GM12878 (cell line): ENCODE measurements at regions of chr10 and their contacts with region 1.

Region 1: DNA sequence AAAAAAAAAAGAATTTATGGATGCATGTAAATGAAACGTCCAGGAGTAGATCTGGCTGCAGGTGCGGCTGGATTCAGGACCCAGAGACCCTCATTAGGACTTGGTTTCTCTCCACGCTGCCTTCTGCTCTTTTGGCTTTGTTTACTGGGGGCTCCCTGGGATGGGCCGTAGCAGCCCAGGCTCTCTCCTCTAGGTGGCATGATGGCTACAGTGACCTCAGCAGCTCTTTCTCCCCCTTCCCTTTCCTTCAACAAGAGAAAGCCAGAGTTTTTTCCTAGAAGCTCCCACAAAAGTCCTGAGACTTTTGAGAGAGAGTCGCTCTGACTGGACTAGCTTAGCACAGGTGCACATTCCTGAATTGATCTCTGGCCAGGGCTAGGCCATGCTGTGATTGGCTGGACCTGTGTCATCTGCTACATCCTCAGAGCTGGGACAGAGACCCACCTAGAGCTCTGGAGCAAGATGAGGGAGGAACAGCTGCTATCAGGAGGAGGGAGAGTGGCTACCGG is 67.8 kb upstream of the PDCD4 start:
- DNase-seq: peak; percentile 47
- ATAC-seq: peak; percentile 85
- H3K4me3 ChIP-seq: no peak overlapping the region
- H3K27ac ChIP-seq: peak overlapping the region; percentile 91
- H3K4me1 ChIP-seq: peaks cover 33% of the 10 kb centered on the region
- H3K27me3 ChIP-seq: no peaks in the 10 kb centered on the region
- CTCF ChIP-seq: peak; percentile 76 to 83 (median 81)
- EP300 ChIP-seq: no peak
- POLR2A ChIP-seq: peak; percentile 25; the same call in 1 of the 2 replicates
- RAD21 ChIP-seq: peak; percentile 90

Region 2: DNA sequence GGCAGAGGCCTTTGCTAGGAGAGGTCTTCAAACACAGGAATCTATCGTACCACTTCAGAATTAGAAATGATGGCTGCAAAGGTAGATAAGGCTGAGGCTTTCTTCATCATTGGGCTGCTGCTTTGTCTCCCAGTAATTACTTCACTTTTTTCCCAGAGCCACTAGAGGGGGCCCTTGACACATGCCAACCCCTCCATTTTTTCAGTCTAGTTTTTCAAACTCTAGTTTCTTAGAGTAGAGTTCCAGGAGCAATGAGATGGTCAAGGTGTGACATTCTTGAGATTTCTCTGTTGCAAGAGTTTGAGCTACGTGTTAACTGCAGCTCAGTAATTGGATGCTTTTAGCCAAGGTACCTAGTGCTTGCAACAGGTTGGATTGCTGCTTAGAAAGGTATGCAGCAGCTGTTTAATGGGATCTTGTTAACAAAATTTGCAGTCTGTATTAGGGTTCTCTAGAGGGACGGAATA is 193.5 kb before region 1 on chr10:
- CTCF ChIA-PET with region 1: interaction called, 15 read pairs
- POLR2A ChIA-PET with region 1: no interaction called
- RAD21 ChIA-PET with region 1: interaction called, 11 read pairs
- SMC1A ChIA-PET with region 1: interaction called, 4 read pairs
- in situ Hi-C with region 1: no loop called
- intact Hi-C with region 1: loop called (anchors 5 kb)
- DNase-seq: peak; percentile 24
- ATAC-seq: peak; percentile 10; the same call in 2 of the 3 replicates
- H3K4me3 ChIP-seq: no peak overlapping the region
- H3K27ac ChIP-seq: no peak overlapping the region
- H3K4me1 ChIP-seq: peaks cover 31% of the 10 kb centered on the region
- H3K27me3 ChIP-seq: no peaks in the 10 kb centered on the region
- CTCF ChIP-seq: peak; percentile 85 to 92 (median 88)
- EP300 ChIP-seq: no peak
- POLR2A ChIP-seq: no peak
- RAD21 ChIP-seq: peak; percentile 98

Region 3: GRCh38 chr10:110681023-110681681 is 122.7 kb before region 1 on chr10:
- CTCF ChIA-PET with region 1: no interaction called
- POLR2A ChIA-PET with region 1: no interaction called
- RAD21 ChIA-PET with region 1: no interaction called
- SMC1A ChIA-PET with region 1: no interaction called
- in situ Hi-C with region 1: no loop called
- intact Hi-C with region 1: no loop called
- DNase-seq: no peak
- ATAC-seq: peak; percentile 89
- H3K4me3 ChIP-seq: no peak overlapping the region
- H3K27ac ChIP-seq: no peak overlapping the region
- H3K4me1 ChIP-seq: no peaks in the 10 kb centered on the region
- H3K27me3 ChIP-seq: no peaks in the 10 kb centered on the region
- CTCF ChIP-seq: peak; percentile 49 to 64 (median 55)
- EP300 ChIP-seq: no peak
- POLR2A ChIP-seq: no peak
- RAD21 ChIP-seq: peak; percentile 27; the same call in 1 of the 2 replicates

Region 4: DNA sequence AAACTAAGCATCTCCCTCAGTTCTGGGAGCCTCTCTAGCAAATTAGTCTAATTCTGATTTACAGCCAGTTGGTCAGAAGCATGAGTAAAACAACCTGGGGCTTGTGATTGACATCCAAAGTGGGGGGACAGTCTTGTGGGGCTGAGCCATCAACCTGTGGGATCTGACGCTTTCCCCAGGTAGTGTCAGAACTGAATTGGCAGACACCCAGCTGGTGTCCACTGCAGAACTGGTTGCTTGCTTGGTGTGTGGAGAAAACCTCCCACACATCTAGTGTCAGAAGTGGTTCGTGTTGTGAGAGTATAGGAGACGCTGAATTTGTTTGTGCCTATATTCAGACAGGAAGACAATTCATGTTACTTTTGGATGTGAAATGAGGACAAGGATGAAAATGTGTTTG is 24.4 kb before region 1 on chr10:
- CTCF ChIA-PET with region 1: interaction called, 72 read pairs
- POLR2A ChIA-PET with region 1: interaction called, 46 read pairs
- RAD21 ChIA-PET with region 1: interaction called, 135 read pairs
- SMC1A ChIA-PET with region 1: interaction called, 327 read pairs
- in situ Hi-C with region 1: no loop called
- intact Hi-C with region 1: loop called (anchors 1 kb)
- DNase-seq: no peak
- ATAC-seq: peak; percentile 30
- H3K4me3 ChIP-seq: no peak overlapping the region
- H3K27ac ChIP-seq: no peak overlapping the region
- H3K4me1 ChIP-seq: peaks cover 9% of the 10 kb centered on the region; the same call in 1 of the 2 replicates
- H3K27me3 ChIP-seq: no peaks in the 10 kb centered on the region
- CTCF ChIP-seq: no peak
- EP300 ChIP-seq: no peak
- POLR2A ChIP-seq: no peak
- RAD21 ChIP-seq: no peak

Region 5: GRCh38 chr10:110843031-110843430 is 39.1 kb after region 1 on chr10:
- CTCF ChIA-PET with region 1: interaction called, 70 read pairs
- POLR2A ChIA-PET with region 1: interaction called, 48 read pairs
- RAD21 ChIA-PET with region 1: interaction called, 153 read pairs
- SMC1A ChIA-PET with region 1: interaction called, 147 read pairs
- in situ Hi-C with region 1: no loop called
- intact Hi-C with region 1: loop called (anchors 1 kb)
- DNase-seq: peak; percentile 98
- ATAC-seq: peak; percentile 74
- H3K4me3 ChIP-seq: peak overlapping the region; percentile 68
- H3K27ac ChIP-seq: peak overlapping the region; percentile 97
- H3K4me1 ChIP-seq: peaks cover 53% of the 10 kb centered on the region
- H3K27me3 ChIP-seq: no peaks in the 10 kb centered on the region
- CTCF ChIP-seq: no peak
- EP300 ChIP-seq: peak; percentile 53 to 91; a peak in 3 of 4 replicates
- POLR2A ChIP-seq: no peak; the same call in 1 of the 2 replicates
- RAD21 ChIP-seq: peak; percentile 37; the same call in 1 of the 2 replicates

Region 6: DNA sequence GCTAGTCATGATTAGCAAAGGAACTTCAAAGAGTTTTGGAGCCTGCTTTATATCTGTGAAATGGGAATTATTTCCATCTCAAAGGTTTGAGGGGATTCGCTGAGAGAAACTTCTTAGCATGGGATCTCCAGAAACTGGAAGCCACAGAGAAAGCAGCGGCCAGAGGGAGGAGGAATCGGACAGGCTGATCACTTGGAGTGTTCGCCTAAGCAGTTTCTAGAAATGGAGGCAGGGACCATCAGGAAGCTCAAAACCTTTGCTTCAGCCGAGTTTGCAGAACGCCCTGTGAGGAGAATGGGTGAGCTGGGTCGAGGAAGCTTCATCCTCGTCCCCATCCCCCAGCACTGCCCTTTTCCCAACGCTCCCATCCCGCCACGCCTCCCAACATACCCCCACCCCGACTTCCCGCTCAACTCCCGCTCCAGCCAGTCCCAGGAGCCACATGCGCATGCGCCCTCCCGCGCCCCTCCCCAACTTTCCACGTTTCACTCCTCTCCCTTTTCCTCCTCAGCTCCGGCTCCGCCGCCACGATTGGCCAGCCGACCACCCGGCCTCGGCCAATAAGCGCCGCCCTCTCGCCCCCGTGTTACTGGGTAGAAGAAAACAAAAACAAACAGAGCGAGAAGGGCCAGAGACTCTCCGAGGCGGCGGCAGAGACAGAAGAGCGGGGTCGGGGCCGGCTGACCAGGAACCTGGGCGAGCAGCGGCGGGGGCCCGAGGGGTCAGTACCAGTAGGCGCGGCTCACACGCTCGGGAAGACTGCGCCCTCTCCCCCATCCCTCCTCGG is 67.6 kb after region 1 on chr10 and contains the start of gene PDCD4:
- CTCF ChIA-PET with region 1: interaction called, 53 read pairs
- POLR2A ChIA-PET with region 1: interaction called, 20 read pairs
- RAD21 ChIA-PET with region 1: interaction called, 77 read pairs
- SMC1A ChIA-PET with region 1: interaction called, 102 read pairs
- in situ Hi-C with region 1: no loop called
- intact Hi-C with region 1: loop called (anchors 2 kb)
- DNase-seq: peak; percentile 86
- ATAC-seq: peak; percentile 78
- H3K4me3 ChIP-seq: peak within 1 kb of the TSS; percentile 65
- H3K27ac ChIP-seq: peak within 1 kb of the TSS; percentile 99
- H3K4me1 ChIP-seq: peaks cover 48% of the 10 kb centered on the region
- H3K27me3 ChIP-seq: no peaks in the 10 kb centered on the region
- CTCF ChIP-seq: no peak
- EP300 ChIP-seq: no peak
- POLR2A ChIP-seq: peak; percentile 96
- RAD21 ChIP-seq: no peak
- polyA plus RNA-seq, gene PDCD4: 101 to 138 TPM

Region 7: DNA sequence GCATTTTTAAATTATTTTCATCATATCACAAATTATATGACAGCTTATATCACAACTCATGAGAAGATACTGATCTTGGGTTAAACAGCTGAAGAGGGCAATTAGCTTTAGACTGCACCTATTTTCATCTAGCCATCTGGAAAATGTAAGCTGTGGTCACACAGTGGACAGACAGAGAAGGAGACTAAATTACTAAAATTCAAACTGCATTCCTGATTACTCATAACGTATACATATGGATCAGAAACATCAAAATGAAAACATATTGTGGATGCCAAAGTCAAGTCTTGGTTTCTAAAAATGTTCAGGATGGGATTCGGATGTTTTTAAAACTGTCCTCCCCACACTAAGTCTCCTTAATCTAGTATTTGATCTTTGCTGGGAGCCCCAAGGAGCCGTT is 108.5 kb after region 1 on chr10:
- CTCF ChIA-PET with region 1: interaction called, 27 read pairs
- POLR2A ChIA-PET with region 1: no interaction called
- RAD21 ChIA-PET with region 1: interaction called, 33 read pairs
- SMC1A ChIA-PET with region 1: interaction called, 48 read pairs
- in situ Hi-C with region 1: no loop called
- intact Hi-C with region 1: no loop called
- DNase-seq: no peak
- ATAC-seq: no peak
- H3K4me3 ChIP-seq: no peak overlapping the region
- H3K27ac ChIP-seq: no peak overlapping the region
- H3K4me1 ChIP-seq: peaks cover 7% of the 10 kb centered on the region; the same call in 1 of the 2 replicates
- H3K27me3 ChIP-seq: no peaks in the 10 kb centered on the region
- CTCF ChIP-seq: no peak
- EP300 ChIP-seq: no peak
- POLR2A ChIP-seq: no peak
- RAD21 ChIP-seq: no peak